Transverse colon (tissue), 4 donors: ENCODE measurements at regions of chr5 and their contacts with region 1.

Region 1: DNA sequence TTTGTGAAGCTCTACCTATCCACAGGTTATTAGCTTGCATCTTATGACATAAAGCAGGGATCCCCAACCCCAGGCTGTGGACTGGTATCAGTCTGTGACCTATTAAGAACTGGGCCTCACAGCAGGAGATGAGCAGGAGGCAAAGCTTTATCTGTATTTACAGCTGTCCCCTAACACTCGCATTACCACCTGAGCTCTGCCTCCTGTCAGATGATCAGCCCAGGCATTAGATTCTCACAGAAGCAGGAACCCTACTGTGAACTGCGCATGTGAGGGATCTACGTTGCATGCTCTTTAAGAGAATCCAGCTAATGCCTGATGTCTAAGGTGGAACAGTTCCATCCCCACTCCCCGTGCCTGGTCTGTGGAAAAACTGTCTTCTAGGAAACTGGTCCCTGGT is 19.7 kb downstream of the FBXW11 start:
- DNase-seq: no peak
- H3K4me3 ChIP-seq: no peak overlapping the region
- H3K27ac ChIP-seq: no peak overlapping the region
- H3K4me1 ChIP-seq: peaks cover 0 to 23% (median 3%) of the 10 kb centered on the region in 4 donors
- H3K27me3 ChIP-seq: no peaks in the 10 kb centered on the region
- CTCF ChIP-seq: no peak
- EP300 ChIP-seq: no peak
- POLR2A ChIP-seq: no peak

Region 2: GRCh38 chr5:171882118-171882517 is 104.7 kb before region 1 on chr5:
- in situ Hi-C with region 1: no loop called
- intact Hi-C with region 1: no loop called
- DNase-seq: no peak
- H3K4me3 ChIP-seq: no peak overlapping the region
- H3K27ac ChIP-seq: no peak overlapping the region
- H3K4me1 ChIP-seq: no peaks in the 10 kb centered on the region
- H3K27me3 ChIP-seq: no peaks in the 10 kb centered on the region
- CTCF ChIP-seq: no peak
- EP300 ChIP-seq: no peak
- POLR2A ChIP-seq: no peak

Region 3: GRCh38 chr5:172015346-172015745 is 28.6 kb after region 1 on chr5:
- in situ Hi-C with region 1: no loop called
- intact Hi-C with region 1: loop called (anchors 2 kb)
- DNase-seq: no peak
- H3K4me3 ChIP-seq: no peak overlapping the region
- H3K27ac ChIP-seq: no peak overlapping the region
- H3K4me1 ChIP-seq: no peaks in the 10 kb centered on the region
- H3K27me3 ChIP-seq: no peaks in the 10 kb centered on the region
- CTCF ChIP-seq: no peak
- EP300 ChIP-seq: no peak
- POLR2A ChIP-seq: no peak

Region 4: DNA sequence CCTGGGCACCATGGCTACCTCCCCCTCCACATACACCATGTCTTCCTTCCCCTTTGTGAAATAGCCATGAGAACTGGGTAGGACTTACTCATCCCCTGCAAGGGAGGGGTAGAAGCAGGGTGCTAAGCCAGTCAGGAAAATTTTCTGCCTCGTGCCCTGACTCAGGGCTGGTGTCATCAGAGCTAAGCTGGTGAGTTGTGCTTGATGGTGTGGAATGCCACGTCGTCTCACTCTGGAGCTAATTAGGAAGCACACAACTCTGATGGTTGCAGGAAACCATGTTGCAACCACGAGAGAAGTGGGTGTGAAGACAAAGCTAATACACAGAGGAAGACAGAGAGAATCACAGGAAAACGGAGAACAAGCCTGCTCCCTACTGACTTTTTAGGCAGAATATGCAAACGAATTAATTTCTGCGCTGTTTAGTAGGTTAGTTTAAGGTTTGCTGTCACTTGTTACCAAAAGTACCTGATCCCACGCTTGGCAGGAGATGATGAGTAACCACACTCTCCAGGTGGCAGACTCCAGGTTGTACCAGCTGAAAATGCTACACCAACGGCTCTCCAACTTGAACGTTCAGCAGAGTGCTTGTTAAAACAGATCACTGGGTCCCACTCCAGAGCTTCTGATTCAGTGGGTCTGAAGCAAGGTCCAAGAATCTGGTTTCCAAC is 146.7 kb after region 1 on chr5:
- in situ Hi-C with region 1: no loop called
- intact Hi-C with region 1: no loop called
- DNase-seq: no peak
- H3K4me3 ChIP-seq: no peak overlapping the region
- H3K27ac ChIP-seq: peak overlapping the region in 1 of 4 donors; percentile 32
- H3K4me1 ChIP-seq: no peaks in the 10 kb centered on the region
- H3K27me3 ChIP-seq: no peaks in the 10 kb centered on the region
- CTCF ChIP-seq: no peak
- EP300 ChIP-seq: no peak
- POLR2A ChIP-seq: no peak

Region 5: GRCh38 chr5:172322028-172322965 is 335.5 kb after region 1 on chr5:
- in situ Hi-C with region 1: no loop called
- intact Hi-C with region 1: no loop called
- DNase-seq: peak; percentile 14
- H3K4me3 ChIP-seq: no peak overlapping the region
- H3K27ac ChIP-seq: no peak overlapping the region
- H3K4me1 ChIP-seq: no peaks in the 10 kb centered on the region
- H3K27me3 ChIP-seq: no peaks in the 10 kb centered on the region
- CTCF ChIP-seq: no peak
- EP300 ChIP-seq: no peak
- POLR2A ChIP-seq: no peak